ENCODE measurements at regions of chr10 and their contacts with region 1.

Region 1: DNA sequence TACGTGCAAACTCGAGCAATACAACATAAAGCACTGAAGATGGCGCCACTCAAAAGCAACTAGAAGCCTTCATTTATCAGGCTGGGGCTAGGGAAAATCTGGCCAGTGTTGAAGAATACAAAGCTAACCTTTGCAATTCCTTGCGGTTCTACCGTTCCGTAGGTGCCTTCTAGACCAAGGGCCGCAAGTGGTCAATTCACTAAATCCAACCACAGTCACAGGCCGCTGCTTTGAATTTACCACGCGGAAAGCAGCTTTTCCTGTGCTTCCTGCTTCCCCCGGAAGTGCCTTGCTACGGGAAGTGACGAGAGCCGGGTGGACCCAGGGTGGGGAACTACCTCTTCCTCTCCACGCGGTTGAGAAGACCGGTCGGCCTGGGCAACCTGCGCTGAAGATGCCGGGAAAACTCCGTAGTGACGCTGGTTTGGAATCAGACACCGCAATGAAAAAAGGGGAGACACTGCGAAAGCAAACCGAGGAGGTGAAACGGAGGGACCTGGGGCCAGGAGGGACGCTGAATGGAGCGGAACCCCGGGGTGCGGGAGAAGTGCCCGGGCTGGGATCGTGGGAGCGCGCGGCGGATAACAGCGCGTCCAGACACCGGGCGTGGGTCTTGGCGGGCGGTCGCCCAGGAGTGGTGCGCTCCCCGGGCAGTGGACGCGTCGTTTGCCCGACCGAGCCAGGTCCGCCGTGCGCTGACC is at the start of gene DDX21:
- DNase-seq: peak; percentile 79
- ATAC-seq: peak; percentile 82
- H3K4me3 Mint-ChIP-seq: peak within 1 kb of the TSS; percentile 100
- H3K27ac Mint-ChIP-seq: peak within 1 kb of the TSS; percentile 100
- H3K4me1 Mint-ChIP-seq: peaks cover 41% of the 10 kb centered on the region
- H3K27me3 Mint-ChIP-seq: no peaks in the 10 kb centered on the region
- CTCF ChIP-seq: no peak
- total RNA-seq, gene DDX21: 111 and 112 TPM in 2 replicates

Region 2: GRCh38 chr10:68938119-68938518 is 17.9 kb before region 1 on chr10:
- CTCF ChIA-PET with region 1: interaction called, 3 read pairs
- POLR2A ChIA-PET with region 1: no interaction called
- intact Hi-C with region 1: loop called (anchors 2 kb)
- DNase-seq: no peak
- ATAC-seq: no peak
- H3K4me3 Mint-ChIP-seq: no peak overlapping the region
- H3K27ac Mint-ChIP-seq: no peak overlapping the region
- H3K4me1 Mint-ChIP-seq: no peaks in the 10 kb centered on the region
- H3K27me3 Mint-ChIP-seq: no peaks in the 10 kb centered on the region
- CTCF ChIP-seq: no peak

Region 3: DNA sequence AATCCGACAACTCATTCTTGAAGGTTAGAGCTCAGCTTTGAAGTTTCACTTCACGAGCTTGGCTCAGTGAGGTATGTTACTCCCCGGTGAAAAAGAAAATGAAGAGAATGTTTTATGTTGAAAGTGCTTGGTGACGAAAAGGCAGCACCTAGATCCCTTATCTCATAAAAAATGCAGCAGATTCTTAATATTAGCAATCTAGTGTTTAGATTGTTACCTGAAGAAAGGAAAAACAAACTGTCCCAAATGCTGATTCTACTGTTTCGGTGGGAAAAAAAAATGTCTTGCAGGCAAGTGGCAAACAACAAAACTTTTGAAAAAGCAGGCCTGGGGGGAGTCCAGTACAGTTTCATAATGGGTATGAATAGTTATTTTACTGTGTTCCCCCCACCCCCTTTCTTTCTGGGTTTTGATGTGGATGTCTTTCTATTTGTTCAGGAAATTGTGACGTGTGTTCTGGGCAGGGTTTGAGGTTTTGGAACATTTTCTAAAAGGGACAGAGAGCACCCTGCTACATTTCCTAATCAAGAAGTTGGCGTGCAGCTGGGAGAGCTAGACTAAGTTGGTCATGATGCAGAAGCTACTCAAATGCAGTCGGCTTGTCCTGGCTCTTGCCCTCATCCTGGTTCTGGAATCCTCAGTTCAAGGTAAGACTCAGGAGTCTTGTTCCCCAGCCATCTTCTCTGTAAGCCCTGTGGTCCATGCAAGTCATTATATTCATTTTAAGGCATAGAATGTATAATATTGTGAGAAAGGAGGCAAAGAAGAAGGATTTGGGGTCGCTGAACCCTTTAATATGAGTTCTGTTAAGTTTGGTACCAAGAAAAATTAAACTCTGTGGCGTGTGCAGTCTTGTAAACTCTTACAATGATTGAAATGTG is 131.8 kb after region 1 on chr10 and contains the start of gene SRGN:
- CTCF ChIA-PET with region 1: interaction called, 24 read pairs
- POLR2A ChIA-PET with region 1: interaction called, 19 read pairs
- intact Hi-C with region 1: loop called (anchors 1 kb)
- DNase-seq: peak; percentile 26
- ATAC-seq: peak; percentile 71
- H3K4me3 Mint-ChIP-seq: peak within 1 kb of the TSS; percentile 84
- H3K27ac Mint-ChIP-seq: peak within 1 kb of the TSS; percentile 95
- H3K4me1 Mint-ChIP-seq: peaks cover 56% of the 10 kb centered on the region
- H3K27me3 Mint-ChIP-seq: no peaks in the 10 kb centered on the region
- CTCF ChIP-seq: no peak
- total RNA-seq, gene SRGN: 91.4 and 95.5 TPM in 2 replicates

Region 4: GRCh38 chr10:69179743-69180524 is 224.0 kb after region 1 on chr10 and contains the start of gene SUPV3L1:
- CTCF ChIA-PET with region 1: no interaction called
- POLR2A ChIA-PET with region 1: interaction called, 12 read pairs
- intact Hi-C with region 1: loop called (anchors 1 kb)
- DNase-seq: peak; percentile 87
- ATAC-seq: peak; percentile 87
- H3K4me3 Mint-ChIP-seq: peak within 1 kb of the TSS; percentile 95
- H3K27ac Mint-ChIP-seq: peak within 1 kb of the TSS; percentile 100
- H3K4me1 Mint-ChIP-seq: peaks cover 39% of the 10 kb centered on the region
- H3K27me3 Mint-ChIP-seq: no peaks in the 10 kb centered on the region
- CTCF ChIP-seq: no peak
- total RNA-seq, gene SUPV3L1: 38.7 and 49.1 TPM in 2 replicates